AG04449 (cell line): ENCODE measurements at regions of chr10 and their contacts with region 1.

Region 1: GRCh38 chr10:119859420-119860258 is 13.0 kb downstream of the MCMBP start:
- DNase-seq: no peak
- H3K4me3 ChIP-seq: no peak overlapping the region
- CTCF ChIP-seq: peak; percentile 18

Region 2: GRCh38 chr10:119616882-119617570 is 242.6 kb before region 1 on chr10:
- CTCF ChIA-PET with region 1: interaction called, 10 read pairs
- POLR2A ChIA-PET with region 1: no interaction called
- DNase-seq: no peak
- H3K4me3 ChIP-seq: no peak overlapping the region
- CTCF ChIP-seq: peak; percentile 54

Region 3: DNA sequence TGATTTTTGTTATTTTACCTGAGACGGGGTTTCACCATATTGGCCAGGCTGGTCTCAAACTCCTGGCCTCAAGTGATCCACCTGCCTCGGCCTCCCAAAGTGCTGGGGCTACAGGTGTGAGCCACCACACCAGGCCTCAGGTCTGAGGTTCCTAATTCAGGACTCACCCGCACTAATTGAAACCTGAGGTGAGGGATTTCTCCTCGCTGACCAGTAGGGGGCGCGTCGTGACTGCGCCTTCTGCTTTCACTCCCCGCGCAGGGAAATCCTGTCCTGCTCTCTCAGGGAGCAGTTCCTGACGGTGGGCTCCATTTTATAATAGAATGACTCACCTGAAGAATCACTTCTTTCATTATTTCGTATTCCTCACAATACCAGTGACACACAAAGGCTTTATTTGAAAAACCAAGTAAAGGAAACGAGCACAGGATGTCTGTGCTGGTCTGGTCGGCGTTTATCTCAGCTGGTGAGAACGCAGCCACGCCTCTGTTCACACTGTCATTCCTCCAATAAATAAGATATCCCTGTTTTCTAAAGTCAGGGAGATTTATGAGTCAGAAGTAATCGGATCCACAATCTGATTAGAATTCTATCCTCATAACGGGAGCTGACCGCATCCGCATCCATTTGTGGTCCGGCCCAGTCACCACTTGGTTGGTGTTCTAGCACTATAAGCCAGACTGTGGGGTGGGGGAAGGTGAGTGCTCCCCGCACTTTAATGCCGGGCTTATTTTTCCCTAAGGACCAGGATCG is 173.0 kb before region 1 on chr10:
- CTCF ChIA-PET with region 1: interaction called, 122 read pairs
- POLR2A ChIA-PET with region 1: no interaction called
- DNase-seq: peak; percentile 34
- H3K4me3 ChIP-seq: peak overlapping the region; percentile 44
- CTCF ChIP-seq: peak; percentile 90

Region 4: DNA sequence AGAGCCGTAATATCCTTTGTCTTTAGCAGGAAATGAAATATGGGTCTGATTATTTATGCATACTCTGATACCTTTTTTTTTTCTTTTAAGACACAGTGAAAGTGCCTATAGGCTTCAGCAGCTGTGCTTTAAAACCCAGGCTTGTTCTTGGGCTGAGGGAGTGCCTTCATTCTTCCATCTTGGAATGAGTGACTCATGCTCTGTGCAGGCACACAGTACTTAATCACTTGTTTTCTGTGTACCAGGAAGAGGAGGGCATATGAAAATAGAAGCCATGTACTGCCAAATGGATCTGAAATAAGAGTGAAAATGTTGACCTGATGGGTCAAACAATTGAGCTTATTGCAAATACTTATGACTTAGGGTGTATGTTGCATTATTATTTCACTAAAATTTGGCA is 121.8 kb before region 1 on chr10:
- CTCF ChIA-PET with region 1: interaction called, 39 read pairs
- POLR2A ChIA-PET with region 1: no interaction called
- DNase-seq: peak; percentile 54
- H3K4me3 ChIP-seq: no peak overlapping the region
- CTCF ChIP-seq: no peak

Region 5: GRCh38 chr10:119761106-119761505 is 98.5 kb before region 1 on chr10:
- CTCF ChIA-PET with region 1: interaction called, 664 read pairs
- POLR2A ChIA-PET with region 1: no interaction called
- DNase-seq: peak; percentile 74
- H3K4me3 ChIP-seq: no peak overlapping the region
- CTCF ChIP-seq: no peak

Region 6: DNA sequence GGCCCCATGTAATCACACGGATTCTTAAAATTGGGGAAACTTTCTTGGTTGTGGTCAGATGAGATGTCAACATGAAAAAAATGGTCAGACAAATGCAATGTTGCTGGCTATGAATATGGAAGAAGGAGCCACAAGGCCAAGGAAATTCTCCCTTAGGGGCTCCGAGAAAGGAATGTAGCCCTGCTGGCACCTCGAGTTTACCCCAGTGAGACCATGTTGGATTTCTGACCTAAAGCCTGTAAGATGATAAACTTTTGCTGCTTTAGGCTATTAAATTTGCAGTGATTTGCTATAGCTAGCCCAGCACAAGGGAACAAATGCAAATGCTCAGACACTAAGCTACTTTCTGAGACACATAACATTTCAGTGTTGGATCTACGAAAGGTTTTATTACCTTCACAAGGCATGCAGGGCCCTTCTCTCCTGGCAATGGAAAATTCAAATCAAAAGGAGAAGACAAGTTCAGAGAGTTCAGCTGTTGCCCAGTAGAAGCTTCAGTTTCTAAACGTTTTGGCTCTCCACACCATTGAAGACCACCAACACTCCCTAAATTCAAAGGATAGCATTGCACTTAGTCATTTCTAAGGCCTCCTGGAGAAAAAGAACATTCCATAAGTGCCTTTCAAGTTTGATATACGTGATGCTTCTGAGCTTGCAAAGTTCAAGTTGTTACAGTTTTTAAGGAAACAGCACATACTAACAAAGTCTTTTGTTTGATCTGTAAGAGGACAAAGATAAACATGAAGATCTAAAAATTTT is 10.4 kb before region 1 on chr10:
- CTCF ChIA-PET with region 1: interaction called, 29 read pairs
- POLR2A ChIA-PET with region 1: no interaction called
- DNase-seq: peak; percentile 46
- H3K4me3 ChIP-seq: no peak overlapping the region
- CTCF ChIP-seq: no peak